ENCODE measurements at regions of chr2 and their contacts with region 1.

Region 1: DNA sequence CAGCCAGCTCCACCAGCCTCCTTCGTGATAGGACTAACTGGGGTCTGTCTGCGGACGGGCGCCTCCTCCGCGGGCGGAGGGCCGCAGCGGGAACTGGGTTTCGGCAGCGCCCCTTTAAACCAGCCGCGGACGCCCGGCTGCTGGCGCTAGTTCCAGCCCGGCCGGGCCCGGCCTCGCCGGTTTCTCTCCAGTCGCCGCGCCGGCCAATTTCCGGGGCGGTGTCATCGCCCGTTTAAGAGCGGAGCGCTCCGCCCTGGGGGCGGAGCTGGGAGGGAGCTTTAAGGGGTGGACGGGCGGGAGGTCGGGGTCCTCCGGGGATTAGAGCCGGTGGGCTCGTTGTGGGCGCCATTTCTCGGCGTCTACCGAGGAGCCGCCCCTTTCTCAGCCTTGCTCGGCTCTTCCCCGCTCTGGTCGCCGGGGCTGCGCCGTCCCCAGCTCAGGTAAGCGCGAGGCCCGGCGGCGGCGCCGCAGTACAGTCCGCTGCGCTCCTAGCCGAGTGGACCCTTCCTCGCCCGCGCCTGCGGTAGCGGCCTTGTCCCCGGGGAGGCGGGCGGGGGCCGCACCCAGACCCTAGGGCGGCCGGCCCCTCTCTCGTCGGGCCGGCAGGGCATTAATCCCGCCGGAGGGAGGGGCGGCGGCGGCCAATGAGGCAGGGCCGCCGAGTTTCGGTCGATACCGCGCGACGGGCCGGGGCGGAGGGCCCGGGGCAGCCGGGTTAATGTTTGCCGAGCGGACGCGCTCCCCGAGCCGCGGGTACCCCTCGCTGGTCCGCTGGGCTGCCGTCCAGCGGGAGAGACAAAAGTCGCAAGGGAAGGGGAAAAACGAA is at the start of gene EPB41L5:
- DNase-seq: peak; percentile 77
- ATAC-seq: peak; percentile 87
- H3K4me3 Mint-ChIP-seq: peak within 1 kb of the TSS; percentile 87
- H3K27ac Mint-ChIP-seq: peak within 1 kb of the TSS; percentile 79
- H3K4me1 Mint-ChIP-seq: peaks cover 32% of the 10 kb centered on the region
- H3K27me3 Mint-ChIP-seq: no peaks in the 10 kb centered on the region
- CTCF ChIP-seq: no peak
- total RNA-seq, gene EPB41L5: 20.9 and 29.4 TPM in 2 replicates

Region 2: DNA sequence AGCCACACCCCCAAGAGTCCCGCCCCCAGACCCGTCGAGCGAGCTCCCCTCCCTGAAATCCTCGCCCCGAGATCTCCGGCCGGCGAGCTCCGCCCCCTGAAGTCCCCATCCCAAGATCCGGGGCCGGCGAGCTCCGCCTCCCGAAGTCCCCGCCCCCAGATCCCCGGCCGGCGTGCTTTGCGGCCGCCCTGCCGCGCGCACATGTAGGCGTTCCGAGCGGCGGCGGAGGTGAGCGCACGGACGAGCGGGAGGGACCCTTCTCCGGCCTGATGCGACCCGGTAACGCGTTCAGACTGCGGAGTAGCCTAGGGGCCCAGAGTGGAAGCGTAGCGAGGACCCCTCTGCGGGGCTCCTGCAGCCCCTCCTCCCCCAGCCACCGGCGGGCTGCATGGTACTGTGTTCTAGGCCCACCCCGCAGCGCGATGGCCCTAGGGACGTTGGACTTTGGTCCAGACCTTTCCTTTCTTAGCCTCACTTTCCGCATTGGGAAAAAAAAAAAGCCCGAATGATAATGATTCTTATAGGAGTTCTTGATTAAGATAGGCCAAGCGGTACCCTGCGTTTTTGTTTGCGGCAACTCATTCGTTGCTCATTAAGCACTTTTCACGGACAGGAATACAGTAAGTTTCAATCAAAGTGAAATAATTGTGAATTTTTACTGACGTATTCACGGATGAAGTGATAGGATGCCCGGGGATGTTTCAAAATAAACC is 333.8 kb before region 1 on chr2 and contains the start of gene TMEM177:
- CTCF ChIA-PET with region 1: no interaction called
- POLR2A ChIA-PET with region 1: no interaction called
- intact Hi-C with region 1: loop called (anchors 2 kb)
- DNase-seq: peak; percentile 90
- ATAC-seq: peak; percentile 96
- H3K4me3 Mint-ChIP-seq: peak within 1 kb of the TSS; percentile 90
- H3K27ac Mint-ChIP-seq: peak within 1 kb of the TSS; percentile 68
- H3K4me1 Mint-ChIP-seq: peaks cover 23% of the 10 kb centered on the region
- H3K27me3 Mint-ChIP-seq: no peaks in the 10 kb centered on the region
- CTCF ChIP-seq: no peak
- total RNA-seq, gene TMEM177: 9.0 and 10.3 TPM in 2 replicates

Region 3: GRCh38 chr2:119795309-119796303 is 217.4 kb before region 1 on chr2:
- CTCF ChIA-PET with region 1: no interaction called
- POLR2A ChIA-PET with region 1: no interaction called
- intact Hi-C with region 1: no loop called
- DNase-seq: no peak
- ATAC-seq: no peak
- H3K4me3 Mint-ChIP-seq: no peak overlapping the region
- H3K27ac Mint-ChIP-seq: no peak overlapping the region
- H3K4me1 Mint-ChIP-seq: peaks cover 7% of the 10 kb centered on the region
- H3K27me3 Mint-ChIP-seq: no peaks in the 10 kb centered on the region
- CTCF ChIP-seq: no peak

Region 4: GRCh38 chr2:119996148-119996547 is 16.8 kb before region 1 on chr2:
- CTCF ChIA-PET with region 1: no interaction called
- POLR2A ChIA-PET with region 1: no interaction called
- intact Hi-C with region 1: no loop called
- DNase-seq: no peak
- ATAC-seq: no peak
- H3K4me3 Mint-ChIP-seq: no peak overlapping the region
- H3K27ac Mint-ChIP-seq: no peak overlapping the region
- H3K4me1 Mint-ChIP-seq: no peaks in the 10 kb centered on the region
- H3K27me3 Mint-ChIP-seq: peaks cover 6% of the 10 kb centered on the region
- CTCF ChIP-seq: no peak

Region 5: DNA sequence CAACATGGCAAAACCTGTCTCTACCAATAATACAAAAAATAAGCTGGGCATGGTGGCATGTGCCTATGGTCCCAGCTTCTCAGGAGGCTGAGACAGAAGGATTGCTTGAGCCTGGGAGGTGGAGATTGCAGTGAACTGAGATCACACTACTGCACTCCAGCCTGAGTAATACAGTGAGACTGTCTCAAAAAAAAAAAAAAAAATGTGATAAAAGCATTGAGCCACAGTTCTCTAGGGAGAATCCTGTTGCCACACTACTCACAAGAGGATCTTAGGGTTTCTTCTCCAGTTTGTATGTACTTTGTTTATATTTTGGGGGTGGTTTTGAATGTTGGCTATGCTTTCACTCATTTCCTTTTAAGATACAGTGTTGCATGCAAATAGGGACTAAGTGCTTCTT is 148.2 kb after region 1 on chr2:
- CTCF ChIA-PET with region 1: no interaction called
- POLR2A ChIA-PET with region 1: interaction called, 10 read pairs
- intact Hi-C with region 1: no loop called
- DNase-seq: no peak
- ATAC-seq: no peak
- H3K4me3 Mint-ChIP-seq: no peak overlapping the region
- H3K27ac Mint-ChIP-seq: no peak overlapping the region
- H3K4me1 Mint-ChIP-seq: no peaks in the 10 kb centered on the region
- H3K27me3 Mint-ChIP-seq: no peaks in the 10 kb centered on the region
- CTCF ChIP-seq: no peak

Measured in activated B cell treated with CpG ODN at 0.5 μM for 24 hours (primary cell).